Activated naive CD4-positive, alpha-beta T cell treated with anti-CD3 and anti-CD28 coated beads for 36 hours (primary cell): ENCODE measurements at regions of chr15 and their contacts with region 1.

Region 1: GRCh38 chr15:38690689-38691332 is 126.2 kb upstream of the RASGRP1 start:
- DNase-seq: peak; percentile 91
- H3K4me3 Mint-ChIP-seq: no peak overlapping the region
- H3K27ac Mint-ChIP-seq: no peak overlapping the region
- H3K4me1 Mint-ChIP-seq: peaks cover 63% of the 10 kb centered on the region
- H3K27me3 Mint-ChIP-seq: no peaks in the 10 kb centered on the region

Region 2: DNA sequence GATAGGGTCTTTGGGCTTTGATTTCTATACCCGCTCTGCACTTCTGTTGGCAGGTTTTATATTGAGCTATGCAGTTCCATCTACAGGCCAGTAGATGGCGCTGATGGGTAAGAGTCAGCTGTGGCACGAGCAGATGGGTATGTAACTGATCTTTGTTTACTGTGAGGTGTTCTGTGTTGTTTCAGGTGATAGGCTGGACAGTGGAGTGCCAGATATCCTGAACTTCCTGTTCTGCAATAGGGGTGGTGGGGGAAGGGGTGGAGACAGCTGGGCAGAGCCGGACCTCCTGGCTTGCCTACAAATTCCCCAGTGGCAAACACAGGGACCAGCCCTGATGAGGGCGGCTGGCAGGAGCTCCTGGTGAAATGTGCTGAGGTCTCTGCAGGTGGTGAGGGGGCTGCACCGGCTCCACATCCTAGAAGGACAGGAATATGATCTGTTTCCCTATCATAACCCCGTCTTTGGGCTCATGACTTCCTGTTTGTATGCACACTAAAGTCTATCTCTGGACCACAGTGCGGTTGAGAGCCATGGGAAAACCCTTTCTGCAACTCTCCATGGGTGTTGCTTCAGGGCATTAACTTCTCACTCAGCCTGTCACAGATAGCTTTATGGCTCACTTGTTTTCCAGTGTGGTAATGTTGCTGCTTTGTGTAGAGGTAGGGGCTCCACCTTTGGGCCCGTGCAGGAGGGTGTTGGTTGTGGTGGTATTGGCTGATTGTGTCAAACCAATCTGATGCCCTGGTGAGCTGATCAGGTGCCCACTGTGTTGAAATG is 250.3 kb before region 1 on chr15:
- CTCF ChIA-PET with region 1: interaction called, 306 read pairs
- intact Hi-C with region 1: loop called (anchors 1 kb)
- DNase-seq: peak; percentile 64
- H3K4me3 Mint-ChIP-seq: no peak overlapping the region
- H3K27ac Mint-ChIP-seq: no peak overlapping the region
- H3K4me1 Mint-ChIP-seq: peaks cover 4% of the 10 kb centered on the region
- H3K27me3 Mint-ChIP-seq: no peaks in the 10 kb centered on the region

Region 3: DNA sequence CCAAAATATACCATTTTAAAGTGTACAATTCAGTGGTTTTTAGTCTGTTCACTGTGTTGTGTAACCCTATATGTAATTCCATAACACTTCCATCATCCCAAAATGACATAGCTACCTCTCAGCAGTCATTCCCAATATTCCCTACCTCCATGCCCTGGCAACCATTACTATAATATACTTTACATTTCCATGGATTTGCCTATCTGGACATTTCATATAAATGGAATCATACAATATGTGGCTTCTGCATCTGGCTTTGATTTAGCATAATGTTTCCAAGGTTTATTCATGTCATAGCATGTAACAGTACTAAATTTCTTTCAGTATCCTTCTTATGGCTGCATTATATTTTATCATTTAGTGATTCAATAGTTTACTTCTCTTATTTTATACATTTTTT is 211.5 kb before region 1 on chr15:
- CTCF ChIA-PET with region 1: interaction called, 58 read pairs
- intact Hi-C with region 1: loop called (anchors 1 kb)
- DNase-seq: no peak
- H3K4me3 Mint-ChIP-seq: no peak overlapping the region
- H3K27ac Mint-ChIP-seq: no peak overlapping the region
- H3K4me1 Mint-ChIP-seq: peaks cover 27% of the 10 kb centered on the region
- H3K27me3 Mint-ChIP-seq: no peaks in the 10 kb centered on the region

Region 4: GRCh38 chr15:38508647-38509046 is 182.2 kb before region 1 on chr15:
- CTCF ChIA-PET with region 1: interaction called, 22 read pairs
- intact Hi-C with region 1: no loop called
- DNase-seq: peak; percentile 37
- H3K4me3 Mint-ChIP-seq: no peak overlapping the region
- H3K27ac Mint-ChIP-seq: peak overlapping the region; percentile 80
- H3K4me1 Mint-ChIP-seq: peaks cover 24% of the 10 kb centered on the region
- H3K27me3 Mint-ChIP-seq: no peaks in the 10 kb centered on the region

Region 5: GRCh38 chr15:38631126-38632075 is 59.4 kb before region 1 on chr15:
- CTCF ChIA-PET with region 1: interaction called, 12 read pairs
- intact Hi-C with region 1: loop called (anchors 5 kb)
- DNase-seq: peak; percentile 27
- H3K4me3 Mint-ChIP-seq: peak overlapping the region; percentile 30
- H3K27ac Mint-ChIP-seq: peak overlapping the region; percentile 85
- H3K4me1 Mint-ChIP-seq: peaks cover 50% of the 10 kb centered on the region
- H3K27me3 Mint-ChIP-seq: no peaks in the 10 kb centered on the region

Region 6: GRCh38 chr15:38707802-38708671 is 17.2 kb after region 1 on chr15:
- CTCF ChIA-PET with region 1: interaction called, 36 read pairs
- intact Hi-C with region 1: no loop called
- DNase-seq: peak; percentile 53
- H3K4me3 Mint-ChIP-seq: no peak overlapping the region
- H3K27ac Mint-ChIP-seq: no peak overlapping the region
- H3K4me1 Mint-ChIP-seq: no peaks in the 10 kb centered on the region
- H3K27me3 Mint-ChIP-seq: no peaks in the 10 kb centered on the region

Region 7: DNA sequence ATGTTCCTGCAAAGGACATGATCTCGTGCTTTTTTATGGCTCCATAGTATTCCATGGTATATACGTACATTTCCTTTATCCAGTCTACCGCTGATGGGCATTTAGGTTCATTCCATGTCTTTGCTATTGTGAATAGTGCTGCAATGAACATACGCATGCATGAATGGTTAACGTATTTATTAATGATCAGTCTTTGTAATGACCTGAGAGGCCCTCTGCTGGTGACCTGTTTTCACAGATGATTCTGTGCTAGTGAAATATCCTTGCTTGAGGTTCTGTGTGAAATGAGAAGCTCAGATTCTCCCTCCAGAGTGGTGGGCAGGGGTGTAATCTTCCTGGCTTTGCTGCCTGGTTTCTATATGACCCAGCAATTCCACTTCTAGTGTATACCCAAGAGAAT is 34.0 kb after region 1 on chr15:
- CTCF ChIA-PET with region 1: no interaction called
- intact Hi-C with region 1: no loop called
- DNase-seq: no peak
- H3K4me3 Mint-ChIP-seq: no peak overlapping the region
- H3K27ac Mint-ChIP-seq: no peak overlapping the region
- H3K4me1 Mint-ChIP-seq: no peaks in the 10 kb centered on the region
- H3K27me3 Mint-ChIP-seq: no peaks in the 10 kb centered on the region